ENCODE measurements at regions of chr3 and their contacts with region 1.

Region 1: DNA sequence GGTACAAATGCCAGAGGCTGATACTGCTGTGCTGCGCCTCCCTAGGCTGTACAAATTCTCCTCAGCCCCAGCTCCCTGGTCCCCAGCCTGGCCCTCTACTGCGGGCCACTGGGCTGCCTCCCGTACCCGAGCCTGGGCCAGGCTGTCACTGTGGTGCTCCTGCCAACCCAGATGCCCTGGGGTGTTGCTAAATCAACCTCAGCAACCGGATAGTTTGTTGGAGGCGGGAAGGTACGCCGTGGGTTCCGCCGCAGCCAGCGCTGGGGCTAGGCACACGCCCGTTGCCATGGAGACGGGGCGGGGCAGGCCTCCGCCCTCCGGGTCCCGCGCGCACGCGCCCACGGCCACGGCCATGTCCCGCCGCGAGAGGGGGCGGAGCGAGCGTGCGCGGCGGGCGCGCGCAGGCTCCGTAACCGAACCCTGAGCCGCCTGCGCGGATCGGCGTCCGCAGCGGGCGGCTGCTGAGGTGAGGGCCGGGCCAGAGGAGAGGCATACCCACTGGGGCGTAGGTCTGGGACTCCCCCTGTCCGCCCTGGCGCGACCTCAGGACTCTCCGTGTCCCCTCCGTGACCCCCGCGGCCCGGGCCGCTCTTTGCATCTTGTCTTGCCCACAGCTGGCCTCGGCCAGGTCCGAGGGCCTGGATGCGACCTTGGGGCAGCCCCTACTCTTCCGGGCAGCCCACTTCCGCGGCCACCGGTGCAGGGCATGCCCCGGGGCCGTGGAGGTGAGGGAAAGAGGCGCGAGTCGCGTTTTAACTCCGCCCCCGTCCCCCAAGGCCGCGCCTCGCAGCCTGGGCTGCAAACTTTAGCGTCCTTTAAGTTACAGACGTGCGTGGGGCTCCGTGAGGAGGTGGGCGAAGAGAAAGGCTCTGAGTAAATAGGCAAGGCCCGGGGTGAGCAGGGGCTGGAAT is at the start of gene TEX264:
- DNase-seq: peak; percentile 93
- H3K4me3 ChIP-seq: peak within 1 kb of the TSS; percentile 78 to 95 (median 89)
- H3K27ac ChIP-seq: peak within 1 kb of the TSS; percentile 88 to 95 (median 92)
- H3K4me1 ChIP-seq: peaks cover 40 to 67% (median 56%) of the 10 kb centered on the region in 4 donors
- H3K27me3 ChIP-seq: no peaks in the 10 kb centered on the region
- CTCF ChIP-seq: peak in 2 of 3 experiments; percentile 10 to 26
- EP300 ChIP-seq: no peak
- POLR2A ChIP-seq: peak; percentile 66
- total RNA-seq, gene TEX264: 48.0 to 73.8 (median 65.4) TPM

Region 2: DNA sequence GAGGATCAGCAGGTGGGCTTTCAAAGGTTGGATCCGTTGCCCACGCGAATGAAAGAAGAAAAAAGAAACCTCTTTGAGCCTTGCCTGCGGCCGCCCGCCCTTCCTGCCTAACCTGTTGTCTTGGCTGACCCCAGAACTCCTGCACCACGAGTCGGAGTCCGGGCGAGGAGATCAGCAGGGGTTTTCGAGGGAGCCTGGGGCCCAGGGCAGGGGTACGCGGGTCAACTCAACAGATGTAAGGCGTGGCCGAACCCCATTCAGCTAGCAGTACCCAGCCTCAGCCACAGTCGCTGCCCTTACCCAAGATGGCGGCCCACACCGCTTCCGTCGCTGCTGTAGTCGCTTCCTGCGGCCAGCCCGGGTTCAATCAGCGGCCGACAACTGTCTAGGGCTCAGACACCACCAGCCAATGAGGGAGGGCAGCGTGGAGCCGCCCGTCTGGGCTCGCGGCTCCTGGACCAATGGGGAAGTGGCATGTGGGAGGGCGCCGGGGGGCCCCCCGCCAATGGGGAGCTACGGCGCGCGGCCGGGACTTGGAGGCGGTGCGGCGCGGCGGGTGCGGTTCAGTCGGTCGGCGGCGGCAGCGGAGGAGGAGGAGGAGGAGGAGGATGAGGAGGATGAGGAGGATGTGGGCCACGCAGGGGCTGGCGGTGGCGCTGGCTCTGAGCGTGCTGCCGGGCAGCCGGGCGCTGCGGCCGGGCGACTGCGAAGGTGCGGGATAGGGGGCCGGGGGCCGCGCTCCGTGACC is 286.2 kb before region 1 on chr3 and contains the start of gene MANF:
- intact Hi-C with region 1: loop called (anchors 10 kb)
- DNase-seq: peak; percentile 99
- H3K4me3 ChIP-seq: peak within 1 kb of the TSS; percentile 76 to 94 (median 82)
- H3K27ac ChIP-seq: peak within 1 kb of the TSS; percentile 88 to 97 (median 93)
- H3K4me1 ChIP-seq: peaks cover 33 to 59% (median 40%) of the 10 kb centered on the region in 4 donors
- H3K27me3 ChIP-seq: no peaks in the 10 kb centered on the region
- CTCF ChIP-seq: peak in 2 of 3 experiments; percentile 15 to 20
- EP300 ChIP-seq: no peak
- POLR2A ChIP-seq: peak; percentile 68
- total RNA-seq, gene MANF: 16.2 to 34.6 (median 24.9) TPM

Region 3: DNA sequence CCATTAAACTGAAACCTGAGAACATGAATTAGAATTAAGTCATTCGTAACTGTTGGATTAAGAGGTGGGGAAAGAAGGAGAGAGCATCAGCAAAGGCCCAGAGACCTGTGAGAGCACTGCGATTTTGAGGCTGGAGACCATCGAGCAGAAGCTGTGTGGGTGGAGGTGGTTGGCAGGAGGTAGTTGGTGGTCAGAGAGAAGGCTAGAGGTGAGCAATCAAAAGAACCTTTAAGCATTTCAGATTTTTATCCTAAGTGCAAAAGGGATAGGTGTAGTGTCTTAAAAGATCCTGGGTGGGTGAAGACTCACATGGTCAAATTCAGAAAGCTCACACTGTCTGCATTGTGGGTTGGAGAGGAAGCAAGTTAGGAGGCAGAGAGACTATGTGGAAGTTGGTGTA is 65.1 kb before region 1 on chr3:
- intact Hi-C with region 1: no loop called
- DNase-seq: no peak
- H3K4me3 ChIP-seq: no peak overlapping the region
- H3K27ac ChIP-seq: no peak overlapping the region
- H3K4me1 ChIP-seq: peaks cover 0 to 19% (median 9%) of the 10 kb centered on the region in 4 donors
- H3K27me3 ChIP-seq: no peaks in the 10 kb centered on the region
- CTCF ChIP-seq: no peak
- EP300 ChIP-seq: no peak
- POLR2A ChIP-seq: no peak